Heart left ventricle (tissue), 16 donors: ENCODE measurements at regions of chr11 and their contacts with region 1.

Region 1: GRCh38 chr11:61254403-61255025 is 13.5 kb downstream of the PGA5 start:
- DNase-seq: peak; percentile 39 to 77 (median 57)
- ATAC-seq: peak in 3 of 4 donors; percentile 64 to 72 (median 70)
- H3K4me3 ChIP-seq: no peak overlapping the region
- H3K27ac ChIP-seq: no peak overlapping the region
- H3K4me1 ChIP-seq: peaks cover 0 to 2% (median 0%) of the 10 kb centered on the region in 12 donors
- H3K27me3 ChIP-seq: no peaks in the 10 kb centered on the region
- CTCF ChIP-seq: peak; percentile 66 to 84 (median 78)
- POLR2A ChIP-seq: no peak

Region 2: DNA sequence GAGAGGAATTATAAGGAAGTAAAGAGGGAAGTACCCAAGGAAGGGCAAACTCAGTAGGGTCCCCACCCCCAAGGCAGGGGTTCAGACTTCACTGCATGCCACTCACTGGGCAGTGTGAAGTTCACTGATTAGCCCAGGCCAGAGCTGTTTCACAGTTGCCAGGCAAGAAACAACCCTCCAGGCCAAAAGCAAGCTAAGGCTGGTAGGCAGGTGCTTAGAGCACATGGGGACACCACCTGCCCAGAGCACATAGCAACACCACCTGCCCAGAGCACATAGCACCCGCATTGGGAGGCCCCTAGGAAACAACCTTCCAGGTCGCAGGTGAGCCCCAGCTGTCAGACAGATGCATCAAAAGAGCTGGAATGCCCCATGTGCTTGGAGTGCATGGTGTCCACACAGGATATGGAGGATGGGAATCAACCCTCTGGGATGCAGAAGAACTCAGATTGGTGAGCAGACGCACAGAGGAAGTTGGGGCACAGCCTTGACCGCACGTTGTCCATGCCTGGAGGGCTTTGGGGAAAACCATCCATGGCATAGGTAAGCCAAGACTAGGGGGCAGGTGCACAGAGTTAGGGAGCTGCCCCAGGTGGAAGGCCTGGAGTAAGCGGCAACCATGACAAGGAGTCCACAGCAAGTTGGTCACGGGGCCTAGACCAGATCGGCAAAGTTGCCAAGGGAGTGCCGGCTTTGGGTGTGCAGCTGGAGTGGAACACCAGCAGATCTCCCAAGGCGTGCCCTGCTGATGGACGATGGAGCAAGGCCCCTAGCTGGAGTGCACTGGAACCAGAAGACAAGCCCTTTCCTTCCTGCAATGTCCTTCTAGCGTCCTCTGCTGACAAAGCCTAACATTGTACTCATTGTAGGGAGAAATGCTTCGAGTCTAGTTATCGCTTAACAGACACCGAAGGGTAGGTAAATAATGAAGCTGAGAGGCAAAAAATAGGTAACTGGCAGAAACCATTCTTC is 130.0 kb after region 1 on chr11:
- intact Hi-C with region 1: loop called in 4 of 10 experiments (anchors 5 to 10 kb)
- DNase-seq: no peak
- ATAC-seq: peak in 2 of 4 donors; percentile 14 to 43
- H3K4me3 ChIP-seq: no peak overlapping the region
- H3K27ac ChIP-seq: no peak overlapping the region
- H3K4me1 ChIP-seq: peaks cover 0 to 8% (median 0%) of the 10 kb centered on the region in 12 donors
- H3K27me3 ChIP-seq: no peaks in the 10 kb centered on the region
- CTCF ChIP-seq: no peak
- POLR2A ChIP-seq: no peak

Region 3: DNA sequence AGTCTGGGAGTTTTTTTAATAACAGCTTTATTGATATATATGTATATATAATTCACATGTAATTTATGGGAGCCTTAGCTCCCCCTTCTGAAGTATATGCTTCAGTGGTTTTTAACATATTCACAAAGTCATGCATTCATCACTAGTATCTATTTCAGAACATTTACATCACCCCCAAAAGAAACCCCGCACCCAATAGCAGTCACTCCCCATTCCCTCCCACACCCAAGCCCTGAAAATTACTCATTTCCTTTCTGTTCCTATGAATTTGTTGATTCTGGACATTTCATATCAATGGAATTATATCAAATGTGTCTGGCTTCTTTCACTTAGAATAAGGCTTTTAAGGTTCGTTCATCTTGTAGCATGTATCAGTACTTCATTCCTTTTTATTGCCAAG is 361.9 kb after region 1 on chr11:
- intact Hi-C with region 1: no loop called
- DNase-seq: no peak
- ATAC-seq: no peak
- H3K4me3 ChIP-seq: no peak overlapping the region
- H3K27ac ChIP-seq: no peak overlapping the region
- H3K4me1 ChIP-seq: peaks cover 0 to 7% (median 0%) of the 10 kb centered on the region in 12 donors
- H3K27me3 ChIP-seq: no peaks in the 10 kb centered on the region
- CTCF ChIP-seq: no peak
- POLR2A ChIP-seq: no peak